MCF 10A (cell line): ENCODE measurements at regions of chr3 and their contacts with region 1.

Region 1: GRCh38 chr3:32296256-32297204 is 58.0 kb downstream of the CMTM8 start:
- DNase-seq: peak; percentile 70
- H3K4me3 Mint-ChIP-seq: no peak overlapping the region
- H3K27ac Mint-ChIP-seq: no peak overlapping the region
- H3K4me1 Mint-ChIP-seq: peaks cover 9% of the 10 kb centered on the region
- H3K27me3 Mint-ChIP-seq: no peaks in the 10 kb centered on the region
- CTCF ChIP-seq: peak; percentile 91

Region 2: DNA sequence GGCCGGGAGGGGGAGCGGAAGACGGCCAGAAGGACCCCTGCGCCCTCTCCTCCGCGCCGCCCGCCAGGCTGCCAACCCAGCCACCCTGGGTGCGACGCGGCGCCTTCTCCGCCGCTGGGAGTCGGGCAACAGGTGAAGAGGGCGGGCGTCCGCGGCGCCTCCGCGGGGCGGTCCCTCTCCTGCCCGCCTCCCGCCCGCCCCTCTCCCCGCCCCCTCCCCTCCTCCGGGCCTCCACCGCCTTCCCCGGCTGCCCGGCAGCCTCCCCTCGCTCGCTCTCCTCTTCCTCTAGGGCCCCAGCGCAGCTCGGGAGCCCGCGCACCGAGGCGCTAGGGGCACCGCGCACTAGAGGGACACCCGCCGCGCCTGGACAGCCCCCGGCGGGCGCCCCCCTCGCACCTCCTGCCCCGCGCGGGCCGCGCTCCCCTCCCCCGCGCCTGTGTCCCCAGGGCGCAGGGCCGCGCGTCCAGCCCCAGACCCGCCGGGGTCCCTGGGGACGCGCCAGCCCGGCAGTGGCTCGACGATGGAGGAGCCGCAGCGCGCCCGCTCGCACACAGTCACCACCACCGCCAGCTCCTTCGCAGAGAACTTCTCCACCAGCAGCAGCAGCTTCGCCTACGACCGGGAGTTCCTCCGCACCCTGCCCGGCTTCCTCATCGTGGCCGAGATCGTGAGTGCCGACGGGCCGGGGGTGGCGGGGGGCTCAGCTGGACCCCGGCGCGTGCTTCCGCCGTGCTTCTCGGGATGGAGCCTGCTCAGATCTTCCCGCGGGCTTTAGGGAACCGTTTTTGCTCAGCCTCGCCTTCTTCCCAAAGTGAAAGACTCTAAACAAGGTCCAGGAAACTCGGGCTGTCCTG is 57.9 kb before region 1 on chr3 and contains the start of gene CMTM8:
- CTCF ChIA-PET with region 1: interaction called, 9 read pairs
- POLR2A ChIA-PET with region 1: no interaction called
- intact Hi-C with region 1: loop called (anchors 1 kb)
- DNase-seq: peak; percentile 61
- H3K4me3 Mint-ChIP-seq: peak within 1 kb of the TSS; percentile 84
- H3K27ac Mint-ChIP-seq: no peak within 1 kb of the TSS
- H3K4me1 Mint-ChIP-seq: peaks cover 8% of the 10 kb centered on the region
- H3K27me3 Mint-ChIP-seq: no peaks in the 10 kb centered on the region
- CTCF ChIP-seq: no peak
- total RNA-seq, gene CMTM8: 3.2 and 3.8 TPM in 2 replicates

Region 3: DNA sequence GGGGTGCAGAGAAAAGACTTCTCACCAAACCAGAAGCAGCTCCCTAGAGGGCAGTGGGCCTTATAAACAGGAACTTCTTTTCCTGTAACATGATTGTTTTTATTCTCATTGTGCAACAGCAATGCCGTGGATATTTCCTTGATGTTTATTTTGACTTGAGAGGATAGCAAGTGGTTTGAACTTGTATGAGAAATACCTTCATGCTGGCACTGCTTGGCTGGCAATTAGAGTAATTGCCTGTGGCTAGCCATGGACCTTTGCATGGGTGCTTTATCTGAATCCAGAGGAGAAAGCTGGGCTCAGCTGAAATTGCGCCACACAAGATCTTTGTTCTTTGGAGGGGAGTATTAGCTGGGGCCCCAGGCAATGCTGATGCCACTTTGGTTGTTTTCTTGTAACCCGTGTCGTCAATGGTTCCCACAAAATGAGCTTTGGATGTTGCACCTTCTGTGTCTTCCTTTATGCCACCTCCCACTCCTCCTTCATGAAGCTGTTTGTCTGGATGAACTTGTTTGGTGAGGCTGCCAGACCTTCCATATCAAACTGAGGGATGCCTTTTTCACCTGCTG is 20.2 kb before region 1 on chr3:
- CTCF ChIA-PET with region 1: interaction called, 10 read pairs
- POLR2A ChIA-PET with region 1: interaction called, 3 read pairs
- intact Hi-C with region 1: no loop called
- DNase-seq: peak; percentile 75
- H3K4me3 Mint-ChIP-seq: no peak overlapping the region
- H3K27ac Mint-ChIP-seq: peak overlapping the region; percentile 61
- H3K4me1 Mint-ChIP-seq: peaks cover 25% of the 10 kb centered on the region
- H3K27me3 Mint-ChIP-seq: no peaks in the 10 kb centered on the region
- CTCF ChIP-seq: no peak

Region 4: GRCh38 chr3:32285891-32286290 is 10.6 kb before region 1 on chr3:
- CTCF ChIA-PET with region 1: interaction called, 20 read pairs
- POLR2A ChIA-PET with region 1: interaction called, 3 read pairs
- intact Hi-C with region 1: no loop called
- DNase-seq: no peak
- H3K4me3 Mint-ChIP-seq: no peak overlapping the region
- H3K27ac Mint-ChIP-seq: no peak overlapping the region
- H3K4me1 Mint-ChIP-seq: no peaks in the 10 kb centered on the region
- H3K27me3 Mint-ChIP-seq: no peaks in the 10 kb centered on the region
- CTCF ChIP-seq: no peak

Region 5: DNA sequence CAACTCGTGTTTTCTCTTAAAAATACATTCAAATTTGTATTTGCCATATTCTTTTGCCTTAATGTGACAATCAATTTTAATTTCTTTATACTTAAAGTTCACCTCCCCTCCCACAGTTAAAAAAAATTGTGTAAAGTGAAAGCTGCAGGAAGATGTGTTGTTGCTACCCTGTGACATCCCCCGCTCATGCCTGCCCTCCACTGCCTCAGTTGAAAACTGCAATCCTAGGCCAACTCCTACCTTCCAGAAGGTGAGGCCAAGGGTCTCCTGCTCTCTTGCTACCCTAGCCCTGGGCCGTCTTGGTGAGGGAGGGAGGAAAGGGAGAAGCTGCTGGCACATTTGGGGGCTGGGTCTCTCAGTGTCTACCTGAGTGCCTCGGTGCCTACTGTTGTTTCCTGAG is 38.1 kb after region 1 on chr3:
- CTCF ChIA-PET with region 1: interaction called, 5 read pairs
- POLR2A ChIA-PET with region 1: interaction called, 3 read pairs
- intact Hi-C with region 1: loop called (anchors 1 kb)
- DNase-seq: peak; percentile 20
- H3K4me3 Mint-ChIP-seq: no peak overlapping the region
- H3K27ac Mint-ChIP-seq: no peak overlapping the region
- H3K4me1 Mint-ChIP-seq: no peaks in the 10 kb centered on the region
- H3K27me3 Mint-ChIP-seq: no peaks in the 10 kb centered on the region
- CTCF ChIP-seq: peak; percentile 24

Region 6: DNA sequence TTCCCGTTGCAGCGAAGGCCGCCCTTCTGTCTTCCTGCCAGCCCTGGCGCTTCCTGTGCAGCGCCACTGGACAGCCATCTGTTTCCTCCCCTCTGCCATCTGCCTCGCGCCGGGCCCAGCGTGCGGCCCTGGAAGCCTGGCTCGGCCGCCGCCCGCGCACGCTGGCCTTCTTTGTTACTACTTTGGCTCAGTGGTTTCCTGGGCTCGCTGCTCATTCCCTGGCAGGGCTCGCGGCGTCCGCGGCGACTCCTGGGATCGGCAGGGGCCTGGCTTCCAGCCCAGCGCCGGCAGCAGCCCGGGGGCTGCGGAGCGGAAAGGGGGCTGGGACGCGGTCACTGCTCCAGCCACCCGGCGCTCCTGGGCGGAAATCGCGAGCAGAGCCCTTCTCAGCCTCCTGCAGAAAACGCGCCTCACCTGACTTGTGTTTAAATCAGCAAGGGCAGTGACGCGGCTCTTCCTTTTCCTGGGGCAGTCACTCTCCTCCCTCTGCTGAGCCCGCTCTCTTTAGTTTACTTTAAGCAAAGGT is 105.1 kb after region 1 on chr3:
- CTCF ChIA-PET with region 1: interaction called, 4 read pairs
- POLR2A ChIA-PET with region 1: no interaction called
- intact Hi-C with region 1: loop called (anchors 1 kb)
- DNase-seq: peak; percentile 55
- H3K4me3 Mint-ChIP-seq: peak overlapping the region; percentile 62
- H3K27ac Mint-ChIP-seq: peak overlapping the region; percentile 73
- H3K4me1 Mint-ChIP-seq: peaks cover 13% of the 10 kb centered on the region
- H3K27me3 Mint-ChIP-seq: no peaks in the 10 kb centered on the region
- CTCF ChIP-seq: no peak